Cardiac septum (tissue), 1 donor: ENCODE measurements at regions of chr3 and their contacts with region 1.

Region 1: DNA sequence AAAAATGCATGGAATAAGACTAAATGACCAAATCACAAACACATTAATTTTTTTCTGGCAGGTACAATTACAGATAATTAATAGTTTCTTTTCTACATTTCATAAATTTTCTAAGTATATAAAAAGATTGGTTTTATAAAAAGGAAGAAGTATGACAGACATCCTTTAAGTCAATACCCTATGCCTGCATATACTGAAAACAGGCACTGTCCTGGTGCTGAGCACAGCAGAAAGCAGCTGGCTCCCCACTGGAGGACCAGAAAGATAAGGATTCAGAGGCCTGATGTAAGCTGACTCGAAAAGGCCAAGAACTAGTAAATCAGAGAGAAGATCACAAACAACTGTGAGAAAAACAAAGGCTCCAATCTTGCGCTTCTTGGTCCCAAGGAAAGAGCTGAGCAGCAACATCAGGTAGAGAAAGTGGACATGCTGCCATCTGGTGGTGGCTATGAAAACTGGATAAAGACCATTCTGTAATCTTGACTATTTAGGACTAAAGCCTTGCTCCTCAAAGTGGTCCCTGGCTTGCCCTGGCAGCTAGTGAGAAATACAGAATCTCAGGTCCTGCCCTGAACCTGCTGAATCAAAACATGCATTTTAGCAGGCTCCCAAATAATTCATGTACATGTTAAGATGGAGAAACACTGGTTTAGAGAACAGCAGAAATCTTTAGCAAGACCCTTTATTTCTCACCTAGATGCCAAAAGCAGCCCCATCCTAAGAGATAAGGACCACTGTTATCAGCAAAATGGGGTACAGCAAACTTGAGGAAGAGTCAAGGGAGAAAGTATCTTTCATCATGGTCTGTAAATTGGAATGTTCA is 76.0 kb downstream of the TRANK1 start:
- DNase-seq: no peak

Region 2: GRCh38 chr3:36615861-36616260 is 253.0 kb before region 1 on chr3:
- intact Hi-C with region 1: no loop called
- DNase-seq: no peak

Region 3: DNA sequence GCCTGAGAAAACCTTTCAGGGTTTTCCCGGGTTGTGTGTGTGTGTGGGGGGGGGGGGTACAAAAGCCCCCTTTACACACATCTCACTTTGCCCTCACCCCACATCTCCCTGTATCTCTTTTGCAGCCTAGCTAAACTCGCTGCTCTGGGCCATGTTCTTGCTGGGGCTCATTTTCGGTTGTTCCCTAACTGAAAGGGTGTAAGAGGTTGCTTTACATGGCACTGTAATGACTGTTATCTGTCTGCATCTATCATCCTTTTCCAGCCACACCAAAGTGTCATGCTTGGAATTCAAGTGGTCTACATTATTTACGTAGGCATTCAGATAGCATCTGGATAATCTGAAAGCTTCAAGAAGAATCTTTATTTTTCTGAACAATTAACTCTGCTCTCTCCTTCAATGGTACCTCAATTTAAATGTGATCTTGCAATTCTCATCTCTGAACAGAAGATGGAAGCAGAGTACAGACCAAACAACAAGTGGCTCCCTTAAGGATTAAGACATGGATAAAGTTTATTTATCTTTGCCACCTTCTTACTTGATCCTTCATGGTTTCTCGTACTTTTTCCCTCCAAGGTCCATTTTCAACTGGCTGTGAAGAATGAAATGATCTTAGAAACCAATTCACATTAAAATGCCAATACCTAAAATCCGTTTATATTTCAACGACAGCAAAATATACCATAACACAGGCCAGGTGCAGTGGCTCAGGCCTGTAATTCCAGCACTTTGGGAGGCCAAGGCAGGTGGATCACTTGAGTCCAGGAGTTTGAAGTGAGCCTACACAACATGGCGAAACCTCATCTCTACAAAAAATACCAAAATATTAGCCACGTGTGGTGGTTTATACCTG is 139.4 kb before region 1 on chr3:
- intact Hi-C with region 1: loop called (anchors 2 kb)
- DNase-seq: no peak

Region 4: DNA sequence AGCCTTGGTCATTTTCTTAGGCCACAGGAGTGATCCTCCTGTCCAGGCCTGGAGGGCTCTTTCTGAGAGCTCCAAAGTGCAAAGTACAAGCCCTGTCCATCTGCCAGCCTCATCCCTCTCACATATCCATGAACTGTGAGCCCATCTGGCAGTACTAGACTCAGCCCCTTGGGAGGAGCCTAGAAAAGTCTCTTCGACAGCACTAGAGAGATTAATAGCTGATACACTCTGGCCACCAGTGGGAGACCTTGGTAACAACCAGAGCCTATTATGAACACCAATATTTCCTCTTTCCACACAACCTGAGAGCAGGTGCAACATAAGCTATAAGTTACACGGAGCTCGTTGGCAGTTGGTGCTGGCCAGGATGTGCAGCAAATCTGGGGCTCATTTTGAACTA is 45.0 kb before region 1 on chr3:
- intact Hi-C with region 1: no loop called
- DNase-seq: no peak

Region 5: DNA sequence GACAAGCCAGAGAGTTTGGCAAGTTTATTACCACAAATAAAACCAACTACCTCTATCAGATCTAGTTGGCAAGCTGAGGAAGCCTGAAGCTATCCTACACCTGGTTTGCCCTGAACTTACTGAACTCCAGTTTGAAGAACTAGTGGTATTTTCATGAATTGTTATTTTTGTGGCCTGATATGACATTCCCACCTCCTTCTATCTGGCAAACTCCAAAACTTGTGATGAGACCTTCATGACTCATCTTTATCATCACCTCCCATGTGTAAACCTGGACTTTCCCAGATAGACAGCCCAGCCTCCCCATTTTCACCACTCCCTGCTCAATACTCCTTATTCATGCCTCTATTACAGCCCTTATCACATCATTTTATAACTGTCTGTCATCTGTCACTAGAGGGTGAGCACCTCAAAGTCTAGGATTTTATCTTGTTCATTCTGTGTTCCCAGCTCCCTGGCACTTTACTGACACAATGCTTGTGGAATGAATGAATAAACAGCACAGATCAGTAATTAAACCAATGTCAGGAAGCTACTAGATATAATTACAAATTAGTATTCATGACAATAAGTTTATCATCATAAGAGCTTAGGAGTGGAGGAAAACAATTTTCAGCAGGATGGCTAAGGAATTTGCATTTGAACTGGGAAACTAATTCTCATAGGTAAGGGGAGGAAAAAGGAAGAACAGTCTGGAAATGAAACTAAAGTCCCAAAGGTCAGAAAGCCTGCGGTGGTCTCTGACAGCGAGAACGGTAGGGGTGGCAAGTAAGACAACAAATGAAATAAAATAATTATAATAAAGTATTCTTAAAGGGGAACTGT is 89.2 kb after region 1 on chr3:
- intact Hi-C with region 1: no loop called
- DNase-seq: no peak

Region 6: GRCh38 chr3:37956723-37957528 is 1088.1 kb after region 1 on chr3:
- intact Hi-C with region 1: no loop called
- DNase-seq: no peak